ENCODE measurements at regions of chr1 and their contacts with region 1.

Region 1: DNA sequence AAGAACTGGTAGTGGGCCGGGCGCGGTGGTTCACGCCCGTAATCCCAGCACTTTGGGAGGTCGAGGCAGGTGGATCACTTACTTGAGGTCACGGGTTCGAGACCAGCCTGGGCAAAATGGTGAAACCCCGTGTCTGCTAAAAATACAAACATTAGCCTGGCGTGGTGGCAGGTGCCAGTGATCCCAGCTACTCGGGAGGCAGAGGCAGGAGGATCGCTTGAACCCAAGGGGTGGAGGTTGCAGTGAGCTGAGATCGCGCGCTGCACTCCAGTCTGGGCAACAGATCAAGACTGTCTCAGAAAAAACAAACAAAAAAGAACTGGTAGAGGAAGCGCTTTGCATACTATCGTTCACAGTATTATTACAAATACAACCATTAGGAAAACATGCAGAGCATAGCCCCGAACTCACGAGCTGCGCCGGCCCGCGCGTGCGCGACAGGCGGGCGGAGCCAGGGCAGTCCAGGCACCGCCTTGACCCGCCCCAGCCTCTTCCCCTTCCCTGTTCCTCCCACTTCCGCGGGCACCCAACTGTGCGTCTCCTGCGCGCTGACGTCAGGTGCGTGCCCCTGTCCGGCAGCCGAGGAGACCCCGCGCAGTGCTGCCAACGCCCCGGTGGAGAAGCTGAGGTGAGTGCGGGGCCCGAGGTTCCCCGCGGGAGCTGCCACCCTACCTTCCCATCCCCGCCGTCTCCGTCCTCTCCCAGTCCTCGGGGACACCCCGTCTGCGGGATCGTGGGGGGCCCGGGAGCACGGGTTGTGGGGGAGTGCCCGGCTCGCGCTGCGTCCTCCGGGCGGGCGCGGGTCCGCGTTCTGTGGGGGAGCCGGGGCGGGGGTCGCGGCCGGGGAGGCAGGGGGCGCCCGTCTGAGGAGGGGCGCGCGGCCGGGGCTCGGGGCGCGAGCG is at the start of gene CDC42:
- DNase-seq: peak; percentile 96
- H3K4me3 Mint-ChIP-seq: peak within 1 kb of the TSS; percentile 98
- H3K27ac Mint-ChIP-seq: peak within 1 kb of the TSS; percentile 99
- H3K4me1 Mint-ChIP-seq: peaks cover 52% of the 10 kb centered on the region
- H3K27me3 Mint-ChIP-seq: no peaks in the 10 kb centered on the region
- total RNA-seq, gene CDC42: 342 and 350 TPM in 2 replicates

Region 2: GRCh38 chr1:22039594-22040285 is 12.6 kb before region 1 on chr1:
- intact Hi-C with region 1: loop called (anchors 1 kb)
- DNase-seq: peak; percentile 92
- H3K4me3 Mint-ChIP-seq: peak overlapping the region; percentile 55
- H3K27ac Mint-ChIP-seq: peak overlapping the region; percentile 95
- H3K4me1 Mint-ChIP-seq: peaks cover 40% of the 10 kb centered on the region
- H3K27me3 Mint-ChIP-seq: no peaks in the 10 kb centered on the region

Region 3: GRCh38 chr1:22089787-22090186 is 37.4 kb after region 1 on chr1:
- intact Hi-C with region 1: loop called (anchors 1 kb)
- DNase-seq: no peak
- H3K4me3 Mint-ChIP-seq: peak overlapping the region; percentile 65
- H3K27ac Mint-ChIP-seq: peak overlapping the region; percentile 67
- H3K4me1 Mint-ChIP-seq: peaks cover 71% of the 10 kb centered on the region
- H3K27me3 Mint-ChIP-seq: no peaks in the 10 kb centered on the region